Psoas muscle (tissue), 8 donors: ENCODE measurements at regions of chr14 and their contacts with region 1.

Region 1: GRCh38 chr14:23379366-23380196 is 2.7 kb downstream of the CMTM5 start:
- DNase-seq: peak; percentile 58 to 80
- ATAC-seq: peak; percentile 34 to 70 (median 55)
- H3K4me3 ChIP-seq: no peak overlapping the region
- H3K27ac ChIP-seq: no peak overlapping the region
- H3K4me1 ChIP-seq: no peaks in the 10 kb centered on the region
- H3K27me3 ChIP-seq: peaks cover 0 to 5% (median 0%) of the 10 kb centered on the region in 3 donors
- CTCF ChIP-seq: peak; percentile 87

Region 2: GRCh38 chr14:23327947-23328744 is 51.4 kb before region 1 on chr14:
- intact Hi-C with region 1: loop called (anchors 2 to 5 kb)
- DNase-seq: peak in 1 of 2 donors; percentile 47
- ATAC-seq: peak; percentile 72 to 88 (median 76)
- H3K4me3 ChIP-seq: no peak overlapping the region
- H3K27ac ChIP-seq: no peak overlapping the region
- H3K4me1 ChIP-seq: peaks cover 6% of the 10 kb centered on the region
- H3K27me3 ChIP-seq: no peaks in the 10 kb centered on the region
- CTCF ChIP-seq: peak; percentile 90

Region 3: DNA sequence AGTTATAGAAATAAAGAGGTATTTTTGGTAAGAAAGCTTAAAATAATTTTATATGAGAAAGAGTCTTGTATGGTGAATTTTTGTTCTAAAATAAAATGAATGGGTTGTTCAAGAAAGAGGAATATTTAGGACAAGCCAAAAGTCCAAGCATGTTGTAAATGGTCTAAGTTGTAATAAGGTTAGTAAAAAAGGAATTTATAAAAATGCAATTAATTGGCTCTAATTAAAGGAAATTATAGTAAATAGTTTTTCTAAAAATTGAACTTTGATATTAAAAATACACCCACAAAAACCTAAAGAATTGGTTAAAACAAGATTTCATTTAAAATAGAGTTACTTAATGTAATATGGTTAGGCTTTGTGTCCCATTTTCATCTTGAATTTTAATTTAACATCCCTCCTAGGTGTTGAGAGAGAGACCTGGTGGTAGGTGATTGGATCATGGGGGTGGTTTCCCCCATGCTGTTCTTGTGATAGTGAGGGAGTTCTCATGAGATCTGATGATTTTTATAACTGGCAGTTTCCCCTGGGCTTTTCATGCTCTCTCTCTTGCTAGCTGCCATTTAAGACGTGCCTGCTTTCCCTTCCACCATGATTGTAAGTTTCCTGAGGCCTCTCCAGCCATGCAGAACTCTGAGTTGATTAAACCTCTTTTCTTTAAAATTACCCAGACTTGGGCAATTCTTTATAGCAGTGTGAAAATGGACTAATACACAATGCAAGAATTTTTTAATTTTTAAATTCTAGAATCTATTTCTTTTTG is 39.9 kb before region 1 on chr14:
- intact Hi-C with region 1: no loop called
- DNase-seq: no peak
- ATAC-seq: no peak
- H3K4me3 ChIP-seq: no peak overlapping the region
- H3K27ac ChIP-seq: no peak overlapping the region
- H3K4me1 ChIP-seq: no peaks in the 10 kb centered on the region
- H3K27me3 ChIP-seq: peaks cover 0 to 3% (median 0%) of the 10 kb centered on the region in 3 donors
- CTCF ChIP-seq: no peak